Naive thymus-derived CD4-positive, alpha-beta T cell (primary cell): ENCODE measurements at regions of chr12 and their contacts with region 1.

Region 1: DNA sequence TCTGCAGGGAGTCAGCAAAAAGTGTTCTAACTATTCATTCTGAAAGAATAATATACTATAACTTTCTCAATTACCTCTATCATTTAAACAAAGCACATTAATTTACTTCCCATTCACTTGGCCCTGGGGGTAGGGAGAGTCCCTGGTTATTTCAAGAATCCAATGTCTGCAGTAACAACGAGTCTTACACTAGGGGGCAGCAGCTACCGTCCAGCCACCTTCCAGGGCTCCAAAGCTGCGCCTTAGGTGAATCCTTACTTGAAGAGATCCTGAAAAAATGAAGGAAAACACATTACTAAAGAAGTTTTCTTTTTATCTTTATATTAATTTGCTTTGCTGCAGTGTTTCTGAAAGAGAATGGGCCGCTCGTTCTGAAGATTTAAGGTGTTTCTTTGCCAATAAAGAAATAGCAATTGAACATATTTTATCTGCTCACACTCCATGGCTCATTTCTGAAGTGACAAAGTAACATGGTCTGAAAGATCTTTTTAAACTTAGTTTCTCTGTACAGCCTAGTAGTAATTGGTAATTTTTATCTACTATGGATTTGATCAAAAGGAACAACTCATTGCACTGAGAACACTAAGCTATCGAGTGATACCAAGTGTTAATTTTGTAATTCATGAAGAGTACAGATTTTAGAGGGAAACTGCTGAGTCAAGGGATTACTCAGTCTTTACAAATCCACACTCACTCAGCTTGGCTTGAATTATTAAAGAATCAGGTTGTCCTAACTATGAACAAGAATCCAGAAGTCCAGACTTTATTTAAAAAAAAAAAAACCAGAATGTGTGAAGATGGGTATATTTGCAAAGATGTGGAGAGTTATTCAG is 27.6 kb downstream of the BHLHE41 start:
- DNase-seq: peak; percentile 19 to 64 (median 53)
- ATAC-seq: peak; percentile 94
- H3K4me3 ChIP-seq: no peak overlapping the region
- H3K4me3 Mint-ChIP-seq: no peak overlapping the region
- H3K27ac ChIP-seq: no peak overlapping the region
- H3K27ac Mint-ChIP-seq: no peak overlapping the region
- H3K4me1 ChIP-seq: no peaks in the 10 kb centered on the region
- H3K4me1 Mint-ChIP-seq: no peaks in the 10 kb centered on the region
- H3K27me3 ChIP-seq: no peaks in the 10 kb centered on the region
- H3K27me3 Mint-ChIP-seq: peaks cover 4 to 37% (median 14%) of the 10 kb centered on the region in 5 donors

Region 2: DNA sequence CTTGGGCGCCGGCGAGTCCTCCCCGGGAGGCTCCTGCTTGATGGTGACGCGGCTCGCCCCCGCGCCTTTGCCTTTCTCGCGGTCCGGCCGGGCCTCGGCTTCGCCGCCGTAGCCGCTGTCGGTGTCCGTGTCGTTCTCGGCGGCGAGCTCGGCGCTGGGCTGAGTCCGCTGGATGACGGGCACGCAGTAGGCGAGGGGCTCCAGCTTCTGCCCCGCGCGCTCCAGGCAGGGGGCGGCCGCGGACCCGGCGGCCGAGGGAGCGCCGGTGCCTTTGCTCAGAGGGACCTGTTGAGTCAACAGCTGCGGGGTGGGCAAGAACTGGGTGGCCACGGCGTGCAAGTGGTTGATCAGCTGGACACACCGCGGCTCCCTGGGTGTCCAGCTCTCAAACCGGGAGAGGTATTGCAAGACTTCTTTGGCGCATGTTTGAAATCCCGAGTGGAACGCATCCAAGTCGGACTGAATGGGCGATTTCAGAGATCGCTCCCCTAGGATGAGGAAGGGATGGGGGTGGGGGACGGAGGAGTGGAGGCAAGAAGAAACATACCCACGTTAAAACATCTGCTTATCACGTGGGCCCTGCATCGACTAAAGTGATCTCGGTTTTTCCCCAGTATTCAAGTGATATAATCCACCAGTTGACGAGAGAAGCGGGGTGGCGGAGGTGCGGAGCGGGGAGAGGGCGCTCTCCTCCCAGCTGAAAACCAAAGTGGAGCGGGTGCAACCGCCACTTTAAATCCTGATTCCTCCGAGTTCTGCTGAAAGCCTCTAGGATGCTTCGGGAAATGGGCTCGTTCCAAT is 25.6 kb after region 1 on chr12:
- CTCF ChIA-PET with region 1: interaction called, 8 read pairs
- POLR2A ChIA-PET with region 1: no interaction called
- intact Hi-C with region 1: loop called in 1 of 2 experiments (anchors 1 kb)
- DNase-seq: peak in 7 of 9 donors; percentile 16 to 51 (median 22)
- ATAC-seq: peak; percentile 44
- H3K4me3 ChIP-seq: peak overlapping the region; percentile 39
- H3K4me3 Mint-ChIP-seq: peak overlapping the region; percentile 80 to 91 (median 88)
- H3K27ac ChIP-seq: no peak overlapping the region
- H3K27ac Mint-ChIP-seq: peak overlapping the region in 3 of 9 donors; percentile 46 to 75 (median 58)
- H3K4me1 ChIP-seq: peaks cover 12 to 21% of the 10 kb centered on the region in 2 donors
- H3K4me1 Mint-ChIP-seq: peaks cover 22 to 49% (median 41%) of the 10 kb centered on the region in 7 donors
- H3K27me3 ChIP-seq: peaks cover 23 to 42% of the 10 kb centered on the region in 2 donors
- H3K27me3 Mint-ChIP-seq: peaks cover 67 to 86% (median 78%) of the 10 kb centered on the region in 5 donors

Region 3: DNA sequence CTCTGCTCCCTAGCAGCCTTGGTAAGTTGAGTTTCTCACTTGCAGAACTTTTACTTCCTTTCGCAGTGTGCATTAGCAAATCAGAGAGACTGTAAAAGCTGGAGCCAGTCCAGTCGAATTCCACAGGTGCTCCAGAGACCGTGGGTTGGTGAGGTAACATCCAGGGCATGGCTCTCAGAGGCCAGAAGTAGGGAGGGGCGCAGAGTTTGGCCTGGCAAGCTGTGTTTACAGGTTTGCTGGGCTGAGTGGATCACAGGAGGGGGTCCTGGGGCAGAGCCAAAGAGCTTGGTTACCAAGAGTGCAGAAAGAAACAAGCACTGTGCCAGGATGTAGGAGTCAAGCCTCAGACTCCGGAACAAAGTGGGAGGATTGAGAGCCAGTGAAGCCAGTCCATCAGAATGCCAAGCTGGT is 37.8 kb after region 1 on chr12:
- CTCF ChIA-PET with region 1: no interaction called
- POLR2A ChIA-PET with region 1: no interaction called
- intact Hi-C with region 1: no loop called
- DNase-seq: no peak
- ATAC-seq: no peak
- H3K4me3 ChIP-seq: no peak overlapping the region
- H3K4me3 Mint-ChIP-seq: no peak overlapping the region
- H3K27ac ChIP-seq: no peak overlapping the region
- H3K27ac Mint-ChIP-seq: no peak overlapping the region
- H3K4me1 ChIP-seq: no peaks in the 10 kb centered on the region
- H3K4me1 Mint-ChIP-seq: no peaks in the 10 kb centered on the region
- H3K27me3 ChIP-seq: peaks cover 0 to 5% of the 10 kb centered on the region in 2 donors
- H3K27me3 Mint-ChIP-seq: peaks cover 30 to 54% (median 33%) of the 10 kb centered on the region in 5 donors

Region 4: DNA sequence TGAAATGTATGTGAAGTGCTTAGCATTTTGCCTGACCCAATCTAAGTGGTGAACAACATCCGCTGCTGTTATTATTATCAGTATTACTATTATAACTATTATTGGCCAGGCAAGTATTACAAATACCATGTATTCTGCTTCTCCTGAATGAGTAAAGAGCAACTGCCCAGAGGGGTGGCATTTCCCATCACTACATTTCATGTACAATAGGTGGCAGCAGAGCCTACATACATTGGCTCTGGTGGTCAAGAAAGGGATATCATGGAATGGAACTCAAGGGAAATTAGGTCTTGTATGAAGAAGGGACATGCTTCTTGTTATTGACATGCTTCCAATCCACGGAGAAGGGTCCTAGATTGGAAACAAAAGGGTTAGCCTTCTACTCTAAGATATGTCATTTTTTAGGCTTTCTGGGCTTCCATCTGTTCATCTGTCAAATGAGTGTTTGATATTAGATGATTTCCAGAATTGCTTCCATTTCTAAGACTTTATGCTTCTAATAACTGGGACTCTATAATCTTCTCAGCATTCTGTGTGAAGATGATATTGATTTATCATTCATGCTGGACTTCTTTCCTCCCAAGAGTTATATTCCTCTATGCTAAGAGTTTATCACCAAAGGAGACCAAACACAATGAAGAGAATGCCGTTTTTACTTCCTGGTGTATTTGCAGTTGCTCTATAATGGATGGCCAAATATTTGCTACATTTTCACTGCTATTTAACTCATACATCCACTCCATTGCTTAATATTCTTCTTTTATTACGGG is 337.2 kb after region 1 on chr12:
- CTCF ChIA-PET with region 1: no interaction called
- POLR2A ChIA-PET with region 1: no interaction called
- intact Hi-C with region 1: loop called in 1 of 2 experiments (anchors 5 kb)
- DNase-seq: no peak
- ATAC-seq: no peak
- H3K4me3 ChIP-seq: no peak overlapping the region
- H3K4me3 Mint-ChIP-seq: no peak overlapping the region
- H3K27ac ChIP-seq: no peak overlapping the region
- H3K27ac Mint-ChIP-seq: no peak overlapping the region
- H3K4me1 ChIP-seq: no peaks in the 10 kb centered on the region
- H3K4me1 Mint-ChIP-seq: no peaks in the 10 kb centered on the region
- H3K27me3 ChIP-seq: no peaks in the 10 kb centered on the region
- H3K27me3 Mint-ChIP-seq: no peaks in the 10 kb centered on the region

Region 5: DNA sequence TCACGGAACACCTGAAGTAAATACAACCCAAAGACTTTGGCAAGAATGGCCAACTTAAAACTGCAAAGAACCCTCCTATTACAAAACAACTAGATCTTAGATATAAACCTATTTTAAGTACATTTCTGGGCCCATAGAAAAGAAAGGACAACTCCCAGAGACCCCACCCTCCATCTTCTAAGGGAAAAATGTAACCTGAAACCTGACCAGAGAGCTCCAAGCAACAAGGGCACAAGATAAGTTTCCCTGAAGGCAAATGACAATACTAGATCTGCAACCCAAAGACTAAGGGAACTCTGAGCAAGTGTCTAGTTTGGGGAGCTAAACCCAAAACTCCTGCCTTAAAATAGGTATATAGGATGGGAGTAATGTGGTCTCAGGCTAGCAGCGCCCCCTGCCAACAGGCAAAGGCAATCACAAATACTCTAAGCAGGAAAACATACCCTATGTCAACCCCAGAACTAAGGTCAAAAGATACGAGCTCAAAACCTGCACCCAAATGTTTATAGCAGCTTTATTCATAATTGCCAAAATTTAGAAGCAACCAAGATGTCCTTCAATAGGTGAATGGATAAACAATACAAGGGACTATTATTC is 516.9 kb after region 1 on chr12:
- CTCF ChIA-PET with region 1: interaction called, 3 read pairs
- POLR2A ChIA-PET with region 1: no interaction called
- intact Hi-C with region 1: loop called (anchors 1 to 2 kb)
- DNase-seq: peak in 1 of 9 donors; percentile 3
- ATAC-seq: no peak
- H3K4me3 ChIP-seq: no peak overlapping the region
- H3K4me3 Mint-ChIP-seq: no peak overlapping the region
- H3K27ac ChIP-seq: no peak overlapping the region
- H3K27ac Mint-ChIP-seq: no peak overlapping the region
- H3K4me1 ChIP-seq: no peaks in the 10 kb centered on the region
- H3K4me1 Mint-ChIP-seq: peaks cover 0 to 2% (median 0%) of the 10 kb centered on the region in 7 donors
- H3K27me3 ChIP-seq: no peaks in the 10 kb centered on the region
- H3K27me3 Mint-ChIP-seq: no peaks in the 10 kb centered on the region

Region 6: GRCh38 chr12:26701604-26702215 is 604.4 kb after region 1 on chr12:
- CTCF ChIA-PET with region 1: interaction called, 5 read pairs
- POLR2A ChIA-PET with region 1: no interaction called
- intact Hi-C with region 1: loop called (anchors 1 kb)
- DNase-seq: peak in 5 of 9 donors; percentile 7 to 34 (median 20)
- ATAC-seq: no peak
- H3K4me3 ChIP-seq: no peak overlapping the region
- H3K4me3 Mint-ChIP-seq: no peak overlapping the region
- H3K27ac ChIP-seq: no peak overlapping the region
- H3K27ac Mint-ChIP-seq: no peak overlapping the region
- H3K4me1 ChIP-seq: no peaks in the 10 kb centered on the region
- H3K4me1 Mint-ChIP-seq: peaks cover 0 to 2% (median 0%) of the 10 kb centered on the region in 7 donors
- H3K27me3 ChIP-seq: no peaks in the 10 kb centered on the region
- H3K27me3 Mint-ChIP-seq: no peaks in the 10 kb centered on the region

Region 7: GRCh38 chr12:27142101-27142721 is 1044.9 kb after region 1 on chr12:
- CTCF ChIA-PET with region 1: no interaction called
- POLR2A ChIA-PET with region 1: no interaction called
- intact Hi-C with region 1: loop called in 1 of 2 experiments (anchors 2 kb)
- DNase-seq: peak in 7 of 9 donors; percentile 7 to 32 (median 15)
- ATAC-seq: peak; percentile 80
- H3K4me3 ChIP-seq: no peak overlapping the region
- H3K4me3 Mint-ChIP-seq: no peak overlapping the region
- H3K27ac ChIP-seq: no peak overlapping the region
- H3K27ac Mint-ChIP-seq: no peak overlapping the region
- H3K4me1 ChIP-seq: no peaks in the 10 kb centered on the region
- H3K4me1 Mint-ChIP-seq: peaks cover 1 to 30% (median 11%) of the 10 kb centered on the region in 7 donors
- H3K27me3 ChIP-seq: no peaks in the 10 kb centered on the region
- H3K27me3 Mint-ChIP-seq: peaks cover 0 to 5% (median 0%) of the 10 kb centered on the region in 5 donors

Region 8: DNA sequence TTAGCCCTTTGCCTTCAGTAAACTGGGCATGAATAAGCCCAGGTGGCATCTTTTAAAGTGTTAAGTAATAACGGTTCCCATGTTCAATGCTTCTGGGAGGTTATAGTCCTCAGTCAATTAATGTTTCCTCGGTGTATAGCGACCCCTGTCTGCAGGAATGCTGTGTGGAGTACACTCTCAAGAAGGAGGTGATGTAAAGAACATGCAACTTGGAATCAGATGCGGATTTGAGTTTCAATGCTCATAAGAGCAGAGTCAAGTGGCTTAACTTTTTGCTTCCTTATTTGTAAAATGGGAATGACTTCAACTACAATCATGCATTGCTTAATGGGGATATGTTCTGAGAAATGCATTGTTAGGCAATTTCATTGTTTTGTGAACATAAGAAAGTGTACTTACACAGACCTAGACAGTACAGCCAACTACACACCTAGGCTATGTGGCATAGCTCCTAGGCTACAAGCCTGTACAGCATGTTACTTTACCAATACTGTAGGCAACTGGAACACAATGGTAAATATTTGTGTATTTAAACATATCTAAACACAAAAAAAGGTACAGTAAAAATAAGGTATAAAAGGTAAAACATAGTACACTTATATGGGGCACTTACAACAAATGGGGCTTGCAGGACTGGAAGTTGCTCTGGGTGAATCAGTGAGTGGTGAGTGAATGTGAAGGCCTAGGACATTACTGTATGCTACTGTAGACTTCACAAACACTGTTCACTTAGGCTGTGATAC is 1606.6 kb after region 1 on chr12:
- CTCF ChIA-PET with region 1: no interaction called
- POLR2A ChIA-PET with region 1: no interaction called
- intact Hi-C with region 1: loop called in 1 of 2 experiments (anchors 5 kb)
- DNase-seq: peak; percentile 11 to 64 (median 56)
- ATAC-seq: peak; percentile 97
- H3K4me3 ChIP-seq: no peak overlapping the region
- H3K4me3 Mint-ChIP-seq: no peak overlapping the region
- H3K27ac ChIP-seq: no peak overlapping the region
- H3K27ac Mint-ChIP-seq: no peak overlapping the region
- H3K4me1 ChIP-seq: no peaks in the 10 kb centered on the region
- H3K4me1 Mint-ChIP-seq: peaks cover 0 to 3% (median 0%) of the 10 kb centered on the region in 7 donors
- H3K27me3 ChIP-seq: no peaks in the 10 kb centered on the region
- H3K27me3 Mint-ChIP-seq: peaks cover 7 to 22% (median 13%) of the 10 kb centered on the region in 5 donors